WTC11 (cell line): ENCODE measurements at regions of chr9 and their contacts with region 1.

Region 1: DNA sequence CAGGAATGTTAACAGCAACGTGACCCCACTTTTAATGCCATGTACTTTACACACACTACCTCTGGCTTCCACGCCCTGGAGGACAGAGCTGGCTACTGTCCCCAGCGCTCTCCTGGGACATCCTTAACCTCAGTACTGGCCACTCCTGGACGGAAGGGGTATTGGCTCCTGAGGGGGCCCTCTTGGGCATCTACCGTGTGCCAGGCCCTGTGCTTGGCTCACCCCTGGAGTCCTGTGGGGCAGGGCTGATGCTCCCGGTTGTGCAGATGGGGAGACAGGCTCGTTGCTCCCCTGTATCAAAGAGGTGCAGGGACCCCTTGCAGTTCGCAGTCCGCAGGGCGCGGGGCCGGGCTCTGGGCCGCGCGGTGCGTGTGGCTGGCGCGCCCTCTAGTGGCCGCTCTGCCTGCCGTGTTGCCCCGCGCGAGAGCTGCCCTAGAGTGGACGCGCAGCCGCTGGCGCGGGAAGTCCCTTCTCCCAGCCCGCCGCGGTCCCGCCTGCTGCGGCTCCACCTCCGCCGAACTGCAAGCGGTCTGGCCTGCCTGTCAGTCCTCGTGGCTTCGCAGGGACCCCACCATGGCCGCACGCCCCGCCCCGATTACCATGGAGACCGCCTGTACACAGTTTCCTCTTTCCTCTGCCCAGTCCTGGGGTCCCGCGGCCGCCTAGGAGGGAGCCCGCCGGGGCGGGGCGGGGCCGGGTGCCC is at the start of gene WDR38:
- DNase-seq: peak; percentile 80
- ATAC-seq: peak; percentile 60
- H3K4me3 Mint-ChIP-seq: peak within 1 kb of the TSS; percentile 62
- H3K27ac Mint-ChIP-seq: no peak within 1 kb of the TSS; the same call in 1 of the 2 replicates
- H3K4me1 Mint-ChIP-seq: peaks cover 9% of the 10 kb centered on the region
- H3K27me3 Mint-ChIP-seq: no peaks in the 10 kb centered on the region
- CTCF ChIP-seq: peak; percentile 97
- total RNA-seq, gene WDR38: not detected in 3 replicates

Region 2: DNA sequence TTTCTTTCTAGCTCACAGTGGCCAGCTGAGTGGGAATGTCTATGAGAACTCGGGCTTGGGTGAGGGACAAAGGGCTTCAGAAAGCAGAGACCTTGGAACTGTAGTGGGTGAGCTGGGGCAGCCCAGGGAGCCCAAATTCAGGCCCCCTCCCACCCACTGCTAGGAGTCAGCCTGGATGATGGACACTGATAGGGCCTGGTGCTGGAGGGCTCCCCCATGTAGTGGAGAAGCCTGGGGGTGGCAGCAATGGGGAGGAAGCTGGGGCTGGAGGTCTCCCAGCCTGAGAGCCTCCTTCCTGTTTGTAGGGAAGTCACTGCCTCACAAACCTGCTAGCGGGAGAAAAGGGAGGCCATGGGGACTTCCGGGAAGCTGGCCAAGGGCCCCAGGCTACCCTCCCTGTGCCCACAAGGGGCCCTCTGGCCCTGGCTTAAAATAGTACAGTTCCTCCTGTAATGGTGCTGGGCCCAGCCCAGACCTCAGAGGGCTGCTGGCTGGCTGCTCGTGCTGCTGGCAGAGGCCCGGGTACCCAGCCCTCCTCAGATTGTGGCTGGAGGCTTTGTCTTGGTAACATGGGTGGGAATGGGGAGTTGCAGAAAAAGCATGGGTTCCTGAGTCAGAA is 339.5 kb before region 1 on chr9:
- CTCF ChIA-PET with region 1: interaction called, 15 read pairs
- POLR2A ChIA-PET with region 1: no interaction called
- DNase-seq: no peak
- ATAC-seq: 0 out of 2 replicates have a peak, but pooled peaks have one; percentile 6
- H3K4me3 Mint-ChIP-seq: no peak overlapping the region
- H3K27ac Mint-ChIP-seq: no peak overlapping the region
- H3K4me1 Mint-ChIP-seq: peaks cover 18% of the 10 kb centered on the region
- H3K27me3 Mint-ChIP-seq: no peaks in the 10 kb centered on the region
- CTCF ChIP-seq: no peak

Region 3: GRCh38 chr9:124708633-124709291 is 144.2 kb before region 1 on chr9:
- CTCF ChIA-PET with region 1: interaction called, 12 read pairs
- POLR2A ChIA-PET with region 1: no interaction called
- DNase-seq: no peak
- ATAC-seq: no peak
- H3K4me3 Mint-ChIP-seq: no peak overlapping the region
- H3K27ac Mint-ChIP-seq: peak overlapping the region; percentile 91; the same call in 1 of the 2 replicates
- H3K4me1 Mint-ChIP-seq: peaks cover 50% of the 10 kb centered on the region
- H3K27me3 Mint-ChIP-seq: no peaks in the 10 kb centered on the region
- CTCF ChIP-seq: no peak

Region 4: GRCh38 chr9:124771021-124771866 is 81.7 kb before region 1 on chr9 and contains the start of gene NR6A1:
- CTCF ChIA-PET with region 1: interaction called, 935 read pairs
- POLR2A ChIA-PET with region 1: interaction called, 14 read pairs
- DNase-seq: peak; percentile 98
- ATAC-seq: peak; percentile 81
- H3K4me3 Mint-ChIP-seq: peak within 1 kb of the TSS; percentile 85
- H3K27ac Mint-ChIP-seq: peak within 1 kb of the TSS; percentile 98
- H3K4me1 Mint-ChIP-seq: peaks cover 42% of the 10 kb centered on the region
- H3K27me3 Mint-ChIP-seq: peaks cover 11% of the 10 kb centered on the region
- CTCF ChIP-seq: no peak
- total RNA-seq, gene NR6A1: 164 to 222 TPM (median 218 TPM) in 3 replicates

Region 5: DNA sequence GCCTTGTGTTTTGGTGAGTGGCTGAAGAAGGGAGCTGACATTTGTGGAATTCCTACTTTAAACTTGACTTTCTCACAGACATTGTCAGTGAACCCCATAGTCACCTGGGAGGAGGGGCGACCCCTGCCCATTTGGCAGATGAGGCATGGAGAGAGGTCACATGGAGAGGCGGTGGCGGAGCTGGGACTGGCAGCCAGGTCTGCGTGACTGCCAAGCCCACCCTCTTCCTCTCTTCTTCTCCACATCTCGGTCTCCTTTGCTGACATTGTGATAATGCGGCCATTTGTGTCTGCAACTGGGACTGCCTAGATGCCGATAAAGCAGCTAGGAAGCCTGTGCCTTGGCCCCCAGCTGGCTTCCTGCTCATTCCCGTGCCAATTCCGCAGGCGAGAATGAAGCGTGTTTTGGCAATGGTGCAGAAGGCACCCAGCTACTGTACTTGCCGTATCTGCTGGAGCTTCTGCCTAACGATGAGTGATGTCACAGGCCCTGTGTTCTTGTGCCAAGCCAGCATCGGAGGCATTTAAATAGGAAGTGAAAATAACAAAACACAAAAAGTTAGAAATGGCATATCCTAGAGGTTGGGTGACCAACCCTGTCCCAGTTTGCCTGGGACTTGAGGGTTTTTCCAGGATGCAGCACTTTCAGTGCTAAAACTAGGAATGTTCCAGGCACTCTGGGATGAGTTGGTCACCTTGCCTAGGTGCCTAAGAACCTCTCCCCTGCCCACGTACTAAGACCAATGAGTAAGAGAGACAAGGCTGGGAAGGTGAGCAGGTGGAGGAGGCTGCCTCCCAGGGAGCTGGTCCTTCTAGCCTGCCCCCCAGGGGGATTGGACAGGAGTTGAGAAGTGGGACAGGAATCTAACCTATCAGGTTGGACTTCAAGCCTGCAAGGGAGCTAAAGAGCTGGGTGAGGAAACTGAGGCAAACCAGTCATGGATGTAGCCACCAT is 52.4 kb before region 1 on chr9:
- CTCF ChIA-PET with region 1: interaction called, 44 read pairs
- POLR2A ChIA-PET with region 1: no interaction called
- DNase-seq: no peak
- ATAC-seq: no peak
- H3K4me3 Mint-ChIP-seq: no peak overlapping the region
- H3K27ac Mint-ChIP-seq: peak overlapping the region; percentile 60; the same call in 1 of the 2 replicates
- H3K4me1 Mint-ChIP-seq: 0 out of 2 replicates have a peak, but pooled peaks cover 4% of the 10 kb centered on the region
- H3K27me3 Mint-ChIP-seq: no peaks in the 10 kb centered on the region
- CTCF ChIP-seq: no peak

Region 6: GRCh38 chr9:124831642-124832364 is 21.2 kb before region 1 on chr9:
- CTCF ChIA-PET with region 1: interaction called, 283 read pairs
- POLR2A ChIA-PET with region 1: no interaction called
- DNase-seq: no peak
- ATAC-seq: no peak
- H3K4me3 Mint-ChIP-seq: no peak overlapping the region
- H3K27ac Mint-ChIP-seq: no peak overlapping the region
- H3K4me1 Mint-ChIP-seq: peaks cover 10% of the 10 kb centered on the region
- H3K27me3 Mint-ChIP-seq: peaks cover 8% of the 10 kb centered on the region; the same call in 1 of the 2 replicates
- CTCF ChIP-seq: no peak

Region 7: GRCh38 chr9:124894741-124895170 is 41.8 kb after region 1 on chr9:
- CTCF ChIA-PET with region 1: interaction called, 13 read pairs
- POLR2A ChIA-PET with region 1: interaction called, 3 read pairs
- DNase-seq: peak; percentile 39
- ATAC-seq: peak; percentile 92
- H3K4me3 Mint-ChIP-seq: no peak overlapping the region
- H3K27ac Mint-ChIP-seq: peak overlapping the region; percentile 61
- H3K4me1 Mint-ChIP-seq: peaks cover 7% of the 10 kb centered on the region; the same call in 1 of the 2 replicates
- H3K27me3 Mint-ChIP-seq: no peaks in the 10 kb centered on the region
- CTCF ChIP-seq: no peak